ENCODE measurements at regions of chr17 and their contacts with region 1.

Region 1: DNA sequence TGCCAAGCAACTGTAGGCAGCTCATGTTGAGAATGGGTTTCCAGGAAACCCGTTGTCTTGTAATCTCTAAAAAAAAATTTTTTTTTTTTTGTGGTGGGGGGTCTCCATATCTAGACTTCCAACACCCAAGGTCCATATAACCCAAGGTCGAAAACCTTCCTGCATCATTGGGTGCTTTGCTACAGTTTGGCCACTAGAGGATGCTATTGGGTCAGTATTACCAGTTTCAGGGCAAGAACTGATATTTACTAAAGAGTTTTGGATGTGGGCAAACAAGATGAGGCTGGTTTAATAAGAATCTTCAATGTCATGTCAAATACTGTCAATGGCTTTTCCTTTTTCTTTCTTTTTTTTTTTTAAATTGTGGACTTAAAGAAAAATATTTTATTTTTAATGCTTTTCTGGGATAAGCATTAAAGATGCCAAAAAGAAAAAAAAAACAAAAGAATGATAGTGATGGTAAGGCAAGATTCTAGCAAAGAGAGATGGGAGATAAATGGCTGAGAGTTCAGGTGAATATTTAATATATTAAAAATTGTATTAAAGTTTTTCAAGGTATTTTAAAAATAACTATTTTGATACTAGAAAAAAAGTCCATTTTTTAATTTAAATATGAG is 62.2 kb downstream of the DHRS7C start:
- DNase-seq: peak; percentile 70
- H3K4me3 Mint-ChIP-seq: no peak overlapping the region
- H3K27ac Mint-ChIP-seq: no peak overlapping the region
- H3K4me1 Mint-ChIP-seq: no peaks in the 10 kb centered on the region
- H3K27me3 Mint-ChIP-seq: no peaks in the 10 kb centered on the region

Region 2: GRCh38 chr17:9768381-9768934 is 39.3 kb after region 1 on chr17:
- intact Hi-C with region 1: loop called (anchors 1 kb)
- DNase-seq: no peak
- H3K4me3 Mint-ChIP-seq: no peak overlapping the region
- H3K27ac Mint-ChIP-seq: no peak overlapping the region
- H3K4me1 Mint-ChIP-seq: no peaks in the 10 kb centered on the region
- H3K27me3 Mint-ChIP-seq: no peaks in the 10 kb centered on the region

Measured in activated CD4-positive, alpha-beta T cell treated with anti-CD3 and anti-CD28 coated beads, Interleukin-2, amount 10 ng/mL, durations not matched to agents 24 days and 14 days (primary cell).